Esophagus muscularis mucosa (tissue), 4 donors: ENCODE measurements at regions of chr1 and their contacts with region 1.

Region 1: GRCh38 chr1:27489910-27490741 is at the start of gene WASF2:
- DNase-seq: peak; percentile 99
- H3K4me3 ChIP-seq: peak within 1 kb of the TSS; percentile 87 to 99 (median 88)
- H3K27ac ChIP-seq: peak within 1 kb of the TSS; percentile 96 to 100 (median 98)
- H3K4me1 ChIP-seq: peaks cover 46 to 61% (median 53%) of the 10 kb centered on the region in 4 donors
- H3K27me3 ChIP-seq: no peaks in the 10 kb centered on the region
- CTCF ChIP-seq: no peak
- EP300 ChIP-seq: no peak
- POLR2A ChIP-seq: peak; percentile 95
- total RNA-seq, gene WASF2: 78.5 to 141 (median 101) TPM

Region 2: GRCh38 chr1:27416387-27417111 is 73.6 kb before region 1 on chr1:
- intact Hi-C with region 1: loop called (anchors 5 kb)
- DNase-seq: no peak
- H3K4me3 ChIP-seq: no peak overlapping the region
- H3K27ac ChIP-seq: peak overlapping the region; percentile 82 to 86 (median 85)
- H3K4me1 ChIP-seq: peaks cover 51 to 75% (median 63%) of the 10 kb centered on the region in 4 donors
- H3K27me3 ChIP-seq: no peaks in the 10 kb centered on the region
- CTCF ChIP-seq: peak; percentile 69 to 76 (median 73)
- EP300 ChIP-seq: no peak
- POLR2A ChIP-seq: no peak

Region 3: GRCh38 chr1:27436204-27437159 is 53.6 kb before region 1 on chr1:
- intact Hi-C with region 1: loop called (anchors 5 kb)
- DNase-seq: no peak
- H3K4me3 ChIP-seq: peak overlapping the region in 2 of 4 donors; percentile 9 to 15
- H3K27ac ChIP-seq: peak overlapping the region; percentile 56 to 77 (median 74)
- H3K4me1 ChIP-seq: peaks cover 73 to 96% (median 92%) of the 10 kb centered on the region in 4 donors
- H3K27me3 ChIP-seq: no peaks in the 10 kb centered on the region
- CTCF ChIP-seq: no peak
- EP300 ChIP-seq: no peak
- POLR2A ChIP-seq: no peak

Region 4: DNA sequence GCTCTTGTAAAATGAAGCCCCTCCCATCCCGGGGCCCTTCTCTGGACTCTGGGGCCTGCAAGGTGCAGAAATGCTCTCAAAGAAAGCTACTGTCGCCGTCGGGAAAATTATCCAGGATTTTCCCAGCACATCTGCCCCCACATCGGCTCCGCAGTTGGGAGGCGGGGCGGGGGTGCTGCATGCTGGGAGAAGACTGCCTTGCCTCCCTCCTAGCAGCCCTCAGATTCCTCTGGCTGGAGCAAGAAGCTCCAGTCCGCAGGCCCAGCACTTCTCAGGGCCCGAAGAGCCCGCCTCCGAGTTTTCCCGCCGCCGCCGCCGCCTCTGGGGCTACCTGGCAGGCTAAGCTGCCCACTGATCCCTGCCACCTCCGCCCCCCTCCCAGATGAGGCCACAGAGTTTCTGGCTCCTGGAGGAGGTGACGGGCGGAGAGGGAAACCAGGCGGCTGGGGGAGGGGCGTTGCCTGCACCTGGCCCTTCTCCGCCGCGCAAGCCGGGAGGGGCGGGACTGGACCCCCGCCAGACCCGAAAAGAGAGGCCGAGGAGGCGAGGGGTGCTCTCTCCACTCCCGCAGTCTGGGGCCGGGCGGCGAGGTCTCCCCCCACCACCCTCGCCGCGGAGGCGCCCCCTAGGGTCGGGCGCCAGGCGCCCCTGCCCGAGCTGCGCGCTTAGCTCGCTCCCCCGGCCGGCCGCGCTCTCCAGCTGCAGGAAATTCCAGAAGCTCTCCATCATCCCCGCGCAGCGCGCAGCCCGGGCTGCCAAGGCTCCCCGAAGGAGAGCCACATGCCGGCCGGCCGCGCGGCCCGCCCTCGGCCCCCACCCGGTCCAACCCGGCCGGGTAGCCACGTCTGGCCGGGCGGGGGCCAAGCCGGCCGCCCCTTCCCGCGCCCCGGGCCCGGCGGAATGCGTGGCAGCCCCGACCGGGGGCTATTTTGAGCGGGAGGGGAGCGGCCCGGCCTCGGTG is 85.0 kb after region 1 on chr1:
- intact Hi-C with region 1: no loop called
- DNase-seq: no peak
- H3K4me3 ChIP-seq: peak overlapping the region; percentile 61 to 69 (median 62)
- H3K27ac ChIP-seq: peak overlapping the region; percentile 93 to 98 (median 97)
- H3K4me1 ChIP-seq: peaks cover 82 to 97% (median 91%) of the 10 kb centered on the region in 4 donors
- H3K27me3 ChIP-seq: no peaks in the 10 kb centered on the region
- CTCF ChIP-seq: peak in 2 of 3 experiments; percentile 14 to 21
- EP300 ChIP-seq: no peak
- POLR2A ChIP-seq: no peak